ENCODE measurements at regions of chr17 and their contacts with region 1.

Region 1: GRCh38 chr17:60630352-60630751 is 30.4 kb downstream of the PPM1D start:
- DNase-seq: peak in 3 of 5 donors; percentile 29 to 51 (median 41)
- ATAC-seq: no peak
- H3K4me3 ChIP-seq: no peak overlapping the region
- H3K27ac ChIP-seq: peak overlapping the region in 3 of 12 donors; percentile 4 to 48 (median 4)
- H3K4me1 ChIP-seq: peaks cover 0 to 13% (median 2%) of the 10 kb centered on the region in 12 donors
- H3K27me3 ChIP-seq: no peaks in the 10 kb centered on the region
- CTCF ChIP-seq: no peak
- POLR2A ChIP-seq: no peak

Region 2: DNA sequence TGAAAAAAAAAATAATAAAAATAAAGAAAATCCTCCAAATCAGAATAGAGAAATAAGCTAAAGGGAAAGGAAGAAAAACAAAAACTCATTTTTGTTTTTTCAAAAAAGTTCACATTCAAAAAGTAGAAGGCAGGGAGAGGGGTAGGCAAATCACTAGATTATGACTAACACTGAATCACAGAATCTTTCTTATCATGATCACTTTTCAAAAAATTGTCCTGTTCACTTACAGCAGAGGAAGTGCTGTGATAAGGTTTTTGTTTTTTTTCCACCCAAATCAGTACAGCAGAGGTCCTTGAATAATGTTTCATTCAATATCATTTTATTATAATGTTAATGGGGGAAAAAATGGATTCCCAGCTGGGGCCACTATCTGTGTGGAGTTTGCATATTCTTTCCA is 374.2 kb before region 1 on chr17:
- intact Hi-C with region 1: no loop called
- DNase-seq: no peak
- ATAC-seq: no peak
- H3K4me3 ChIP-seq: no peak overlapping the region
- H3K27ac ChIP-seq: no peak overlapping the region
- H3K4me1 ChIP-seq: no peaks in the 10 kb centered on the region
- H3K27me3 ChIP-seq: no peaks in the 10 kb centered on the region
- CTCF ChIP-seq: no peak
- POLR2A ChIP-seq: no peak

Region 3: DNA sequence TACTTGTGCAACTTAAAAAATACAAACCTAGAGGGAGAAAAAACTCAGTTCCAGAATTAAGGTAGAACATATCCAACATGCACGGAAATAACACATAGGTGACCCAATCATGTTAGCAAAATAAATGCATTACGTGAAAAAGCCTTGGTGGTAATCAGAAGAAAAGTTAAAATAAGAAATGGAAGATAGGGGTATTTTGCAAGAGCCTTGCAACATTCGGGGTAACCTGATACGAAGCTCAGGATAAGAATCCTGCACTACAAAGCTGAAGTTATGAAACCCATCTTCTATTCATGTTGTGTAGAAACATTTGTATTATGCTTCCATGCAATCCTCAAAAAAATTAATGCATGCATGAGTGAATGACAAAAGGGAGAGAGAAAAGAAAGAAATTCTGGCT is 175.0 kb before region 1 on chr17:
- intact Hi-C with region 1: loop called in 4 of 10 experiments (anchors 10 kb)
- DNase-seq: no peak
- ATAC-seq: no peak
- H3K4me3 ChIP-seq: no peak overlapping the region
- H3K27ac ChIP-seq: no peak overlapping the region
- H3K4me1 ChIP-seq: no peaks in the 10 kb centered on the region
- H3K27me3 ChIP-seq: no peaks in the 10 kb centered on the region
- CTCF ChIP-seq: no peak
- POLR2A ChIP-seq: no peak

Region 4: GRCh38 chr17:60468371-60468770 is 162.0 kb before region 1 on chr17:
- intact Hi-C with region 1: loop called in 3 of 10 experiments (anchors 10 kb)
- DNase-seq: no peak
- ATAC-seq: no peak
- H3K4me3 ChIP-seq: no peak overlapping the region
- H3K27ac ChIP-seq: peak overlapping the region in 2 of 12 donors; percentile 6 to 25
- H3K4me1 ChIP-seq: peaks cover 0 to 33% (median 22%) of the 10 kb centered on the region in 12 donors
- H3K27me3 ChIP-seq: no peaks in the 10 kb centered on the region
- CTCF ChIP-seq: no peak
- POLR2A ChIP-seq: no peak

Measured in heart left ventricle (tissue), 16 donors.